Activated CD8-positive, alpha-beta memory T cell treated with anti-CD3 and anti-CD28 coated beads, Interleukin-2, amount 10 ng/mL, durations not matched to agents 7 days and 5 days (primary cell): ENCODE measurements at regions of chrX and their contacts with region 1.

Region 1: GRCh38 chrX:137051978-137052642 is 18.3 kb upstream of the GPR101 start:
- DNase-seq: peak; percentile 84
- ATAC-seq: peak; percentile 94
- H3K4me3 Mint-ChIP-seq: peak overlapping the region; percentile 78
- H3K27ac Mint-ChIP-seq: peak overlapping the region; percentile 54
- H3K4me1 Mint-ChIP-seq: peaks cover 13% of the 10 kb centered on the region
- H3K27me3 Mint-ChIP-seq: peaks cover 42% of the 10 kb centered on the region

Region 2: GRCh38 chrX:136953867-136954787 is 98.0 kb before region 1 on chrX:
- CTCF ChIA-PET with region 1: interaction called, 10 read pairs
- DNase-seq: peak; percentile 81
- ATAC-seq: peak; percentile 80
- H3K4me3 Mint-ChIP-seq: no peak overlapping the region
- H3K27ac Mint-ChIP-seq: no peak overlapping the region
- H3K4me1 Mint-ChIP-seq: peaks cover 2% of the 10 kb centered on the region
- H3K27me3 Mint-ChIP-seq: no peaks in the 10 kb centered on the region